ENCODE measurements at regions of chr3 and their contacts with region 1.

Region 1: GRCh38 chr3:124281453-124282316 is 289.8 kb upstream of the ROPN1 start:
- DNase-seq: peak; percentile 74
- ATAC-seq: peak; percentile 91
- H3K4me3 ChIP-seq: no peak overlapping the region
- H3K27ac ChIP-seq: no peak overlapping the region
- H3K4me1 ChIP-seq: no peaks in the 10 kb centered on the region
- H3K27me3 ChIP-seq: peaks cover 20% of the 10 kb centered on the region
- CTCF ChIP-seq: peak; percentile 96

Region 2: DNA sequence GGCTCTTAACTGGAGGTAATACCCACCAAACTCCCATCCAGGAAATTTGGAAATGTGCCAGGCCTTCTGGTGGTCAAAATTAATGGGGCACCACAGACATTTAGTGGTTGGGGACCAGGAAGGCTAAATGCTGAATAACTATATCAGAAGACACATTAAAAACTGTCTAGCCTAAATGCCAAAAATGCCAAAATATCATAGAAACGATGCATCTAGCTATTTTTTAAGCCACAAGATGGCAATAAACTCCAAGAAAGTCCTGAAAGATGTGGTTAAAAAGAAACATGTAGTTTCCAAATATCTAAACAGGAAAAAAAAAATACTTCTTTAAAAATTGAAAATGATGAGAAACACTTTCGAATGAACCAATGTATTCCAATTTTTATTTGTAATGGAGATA is 340.6 kb before region 1 on chr3:
- CTCF ChIA-PET with region 1: no interaction called
- POLR2A ChIA-PET with region 1: no interaction called
- intact Hi-C with region 1: loop called (anchors 1 kb)
- DNase-seq: no peak
- ATAC-seq: no peak
- H3K4me3 ChIP-seq: no peak overlapping the region
- H3K27ac ChIP-seq: no peak overlapping the region
- H3K4me1 ChIP-seq: no peaks in the 10 kb centered on the region
- H3K27me3 ChIP-seq: no peaks in the 10 kb centered on the region
- CTCF ChIP-seq: peak; percentile 48

Region 3: DNA sequence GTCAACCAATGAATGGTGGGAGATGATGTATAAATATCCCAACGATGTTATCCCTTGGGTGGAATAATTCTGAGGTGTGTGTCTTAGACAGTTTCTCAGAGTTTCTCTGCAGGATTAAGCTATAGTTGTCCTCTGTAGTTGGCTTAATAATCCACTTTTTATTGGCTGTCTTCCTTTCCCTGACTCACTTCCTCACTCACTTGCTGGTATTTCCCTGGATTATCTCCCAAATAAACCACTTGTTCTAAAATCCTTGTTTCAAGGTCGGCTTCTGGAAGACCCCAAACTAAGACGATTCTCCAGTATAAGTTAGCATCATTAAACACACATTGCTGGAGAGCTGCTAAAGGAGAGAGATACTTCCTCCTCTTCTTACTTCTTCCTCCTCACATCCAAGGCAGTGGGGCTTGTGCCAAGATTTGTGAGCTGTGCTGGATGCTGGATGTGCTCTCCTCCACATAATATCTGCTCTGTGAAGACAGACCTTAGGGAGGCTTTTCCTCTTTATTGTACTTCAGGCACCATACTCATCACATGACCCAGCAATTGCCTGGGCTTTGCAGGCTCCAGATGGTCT is 267.2 kb before region 1 on chr3:
- CTCF ChIA-PET with region 1: interaction called, 3 read pairs
- POLR2A ChIA-PET with region 1: no interaction called
- intact Hi-C with region 1: loop called (anchors 1 kb)
- DNase-seq: peak; percentile 16
- ATAC-seq: peak; percentile 31; the same call in 1 of the 2 replicates
- H3K4me3 ChIP-seq: no peak overlapping the region
- H3K27ac ChIP-seq: no peak overlapping the region
- H3K4me1 ChIP-seq: no peaks in the 10 kb centered on the region
- H3K27me3 ChIP-seq: peaks cover 20% of the 10 kb centered on the region
- CTCF ChIP-seq: no peak

Region 4: GRCh38 chr3:124168262-124168661 is 113.4 kb before region 1 on chr3:
- CTCF ChIA-PET with region 1: no interaction called
- POLR2A ChIA-PET with region 1: no interaction called
- intact Hi-C with region 1: no loop called
- DNase-seq: peak; percentile 71
- ATAC-seq: peak; percentile 96
- H3K4me3 ChIP-seq: no peak overlapping the region
- H3K27ac ChIP-seq: no peak overlapping the region
- H3K4me1 ChIP-seq: peaks cover 4% of the 10 kb centered on the region; the same call in 1 of the 2 replicates
- H3K27me3 ChIP-seq: no peaks in the 10 kb centered on the region
- CTCF ChIP-seq: no peak

Measured in PC-3 (cell line).